MCF 10A (cell line): ENCODE measurements at regions of chr10 and their contacts with region 1.

Region 1: DNA sequence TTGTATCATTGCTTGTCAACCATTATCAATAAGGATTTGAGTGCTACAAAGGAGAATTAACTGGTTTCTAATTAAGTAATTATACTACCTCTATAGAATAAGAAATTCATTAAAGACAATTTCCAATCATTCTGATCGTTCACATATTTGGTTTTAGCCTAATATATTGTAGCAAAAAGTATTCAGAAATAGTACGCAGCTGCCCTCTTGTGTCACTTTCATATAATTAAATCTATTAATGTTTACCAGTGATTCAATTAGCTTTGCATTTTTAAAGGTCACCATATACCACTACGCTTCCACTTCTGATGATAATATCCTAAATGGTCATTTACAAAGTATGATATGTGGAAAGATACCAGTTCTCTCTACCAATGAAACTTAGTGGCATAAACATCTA is 128.3 kb downstream of the NEBL start:
- DNase-seq: peak; percentile 42
- H3K4me3 Mint-ChIP-seq: no peak overlapping the region
- H3K27ac Mint-ChIP-seq: no peak overlapping the region
- H3K4me1 Mint-ChIP-seq: peaks cover 9% of the 10 kb centered on the region
- H3K27me3 Mint-ChIP-seq: no peaks in the 10 kb centered on the region
- CTCF ChIP-seq: peak; percentile 58

Region 2: GRCh38 chr10:18793951-18794350 is 1974.9 kb before region 1 on chr10:
- CTCF ChIA-PET with region 1: interaction called, 3 read pairs
- POLR2A ChIA-PET with region 1: no interaction called
- intact Hi-C with region 1: loop called (anchors 5 kb)
- DNase-seq: peak; percentile 49
- H3K4me3 Mint-ChIP-seq: no peak overlapping the region
- H3K27ac Mint-ChIP-seq: no peak overlapping the region
- H3K4me1 Mint-ChIP-seq: peaks cover 7% of the 10 kb centered on the region
- H3K27me3 Mint-ChIP-seq: no peaks in the 10 kb centered on the region
- CTCF ChIP-seq: peak; percentile 46

Region 3: DNA sequence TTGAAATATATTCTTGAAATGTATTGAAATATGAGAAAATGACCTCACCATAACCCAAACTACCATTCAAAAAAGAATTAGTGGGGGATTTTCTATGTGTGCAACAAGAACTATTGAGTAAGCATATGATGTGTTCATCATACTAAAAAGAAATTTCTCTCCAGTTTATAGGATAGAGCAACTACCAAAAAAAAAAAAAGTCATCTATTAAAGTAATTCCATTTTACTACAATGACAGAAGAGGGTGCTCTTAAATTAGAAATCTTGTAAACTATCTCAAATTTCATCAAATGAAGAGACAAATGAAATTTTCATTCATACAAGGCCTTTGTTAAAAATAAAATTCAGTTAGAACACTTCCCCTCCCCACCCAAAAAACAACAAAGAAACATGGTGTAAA is 1148.0 kb before region 1 on chr10:
- CTCF ChIA-PET with region 1: interaction called, 8 read pairs
- POLR2A ChIA-PET with region 1: no interaction called
- intact Hi-C with region 1: loop called (anchors 1 kb)
- DNase-seq: no peak
- H3K4me3 Mint-ChIP-seq: no peak overlapping the region
- H3K27ac Mint-ChIP-seq: no peak overlapping the region
- H3K4me1 Mint-ChIP-seq: no peaks in the 10 kb centered on the region
- H3K27me3 Mint-ChIP-seq: no peaks in the 10 kb centered on the region
- CTCF ChIP-seq: peak; percentile 28

Region 4: DNA sequence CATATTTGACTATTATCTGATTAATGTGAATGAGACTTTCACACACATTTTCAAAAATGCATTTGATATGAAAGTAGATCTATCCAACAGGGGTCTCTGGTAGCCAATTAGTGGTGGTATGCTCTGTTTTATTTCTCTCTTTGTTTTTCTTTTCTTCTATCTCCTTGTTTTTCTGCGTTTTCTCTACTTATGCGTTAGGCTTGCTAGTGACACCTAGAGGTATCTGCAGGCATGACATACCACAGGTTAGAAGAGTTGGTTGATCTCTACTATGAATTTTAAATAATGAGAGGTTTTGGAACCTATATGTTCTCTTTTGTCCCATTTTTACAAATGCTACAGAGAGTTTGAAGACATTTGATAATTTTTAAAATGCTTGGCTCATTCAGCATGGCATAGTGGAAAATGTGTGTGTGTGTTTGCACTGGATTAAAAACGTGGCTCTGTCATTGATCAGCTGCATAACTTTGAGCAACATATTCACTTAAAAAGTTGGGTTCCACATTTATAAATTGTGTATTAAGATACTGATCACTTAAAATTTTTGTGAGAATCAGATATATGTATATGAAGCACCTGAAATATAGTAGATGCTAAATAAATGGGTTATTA is 980.7 kb before region 1 on chr10:
- CTCF ChIA-PET with region 1: interaction called, 4 read pairs
- POLR2A ChIA-PET with region 1: no interaction called
- intact Hi-C with region 1: loop called (anchors 1 kb)
- DNase-seq: peak; percentile 64
- H3K4me3 Mint-ChIP-seq: no peak overlapping the region
- H3K27ac Mint-ChIP-seq: no peak overlapping the region
- H3K4me1 Mint-ChIP-seq: peaks cover 23% of the 10 kb centered on the region
- H3K27me3 Mint-ChIP-seq: no peaks in the 10 kb centered on the region
- CTCF ChIP-seq: peak; percentile 76

Region 5: DNA sequence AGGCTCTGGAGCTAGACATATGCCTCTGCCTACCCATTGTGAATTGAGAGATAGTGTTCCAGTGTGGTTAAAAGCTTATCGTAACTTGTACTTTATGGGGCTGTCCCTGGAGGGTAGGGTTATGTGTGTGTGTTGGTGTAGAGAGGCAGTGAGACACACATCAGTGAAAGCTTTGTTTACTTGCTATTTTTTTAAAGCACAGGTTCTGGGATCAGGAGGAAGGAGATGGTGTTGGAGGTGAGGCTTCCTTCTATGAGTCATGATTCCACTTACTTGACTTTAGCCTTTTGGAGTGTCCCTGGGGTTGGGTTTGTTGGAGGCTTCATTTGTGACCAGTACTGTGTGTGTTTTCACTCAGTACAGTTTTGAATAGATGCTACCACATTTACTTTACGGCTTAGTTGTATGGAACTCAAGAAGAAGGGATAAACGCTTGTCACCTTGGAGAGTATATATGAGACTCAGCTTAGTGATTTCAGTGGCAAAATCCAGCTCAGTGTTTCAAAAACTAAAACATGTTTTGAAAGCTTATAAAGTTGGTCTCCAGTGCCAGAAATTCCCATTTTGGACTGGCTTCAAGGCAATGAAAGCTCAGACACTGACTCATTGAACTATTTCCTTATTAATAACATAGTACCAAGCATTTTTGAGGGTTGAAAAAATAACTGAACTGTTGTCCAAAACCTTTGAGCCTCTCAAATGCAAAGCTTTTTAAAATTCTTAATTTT is 846.4 kb before region 1 on chr10:
- CTCF ChIA-PET with region 1: interaction called, 6 read pairs
- POLR2A ChIA-PET with region 1: no interaction called
- intact Hi-C with region 1: loop called (anchors 10 kb)
- DNase-seq: peak; percentile 85
- H3K4me3 Mint-ChIP-seq: peak overlapping the region; percentile 56
- H3K27ac Mint-ChIP-seq: peak overlapping the region; percentile 83
- H3K4me1 Mint-ChIP-seq: peaks cover 60% of the 10 kb centered on the region
- H3K27me3 Mint-ChIP-seq: no peaks in the 10 kb centered on the region
- CTCF ChIP-seq: no peak

Region 6: GRCh38 chr10:20004087-20004523 is 764.7 kb before region 1 on chr10:
- CTCF ChIA-PET with region 1: interaction called, 4 read pairs
- POLR2A ChIA-PET with region 1: interaction called, 3 read pairs
- intact Hi-C with region 1: loop called (anchors 10 kb)
- DNase-seq: peak; percentile 52
- H3K4me3 Mint-ChIP-seq: peak overlapping the region; percentile 54
- H3K27ac Mint-ChIP-seq: peak overlapping the region; percentile 91
- H3K4me1 Mint-ChIP-seq: peaks cover 27% of the 10 kb centered on the region
- H3K27me3 Mint-ChIP-seq: no peaks in the 10 kb centered on the region
- CTCF ChIP-seq: no peak